Ovary (tissue), 10 donors: ENCODE measurements at regions of chr7 and their contacts with region 1.

Region 1: GRCh38 chr7:22559829-22560489 is 60.0 kb upstream of the STEAP1B start:
- DNase-seq: peak; percentile 60 to 75 (median 71)
- H3K4me3 ChIP-seq: no peak overlapping the region
- H3K27ac ChIP-seq: no peak overlapping the region
- H3K4me1 ChIP-seq: peaks cover 8% of the 10 kb centered on the region
- H3K27me3 ChIP-seq: no peaks in the 10 kb centered on the region
- CTCF ChIP-seq: peak; percentile 54 to 73 (median 72)
- EP300 ChIP-seq: no peak
- POLR2A ChIP-seq: no peak

Region 2: GRCh38 chr7:22640269-22640668 is 80.3 kb after region 1 on chr7:
- intact Hi-C with region 1: no loop called
- DNase-seq: no peak
- H3K4me3 ChIP-seq: no peak overlapping the region
- H3K27ac ChIP-seq: no peak overlapping the region
- H3K4me1 ChIP-seq: no peaks in the 10 kb centered on the region
- H3K27me3 ChIP-seq: no peaks in the 10 kb centered on the region
- CTCF ChIP-seq: no peak
- EP300 ChIP-seq: no peak
- POLR2A ChIP-seq: no peak

Region 3: GRCh38 chr7:22726345-22727185 is 166.6 kb after region 1 on chr7:
- intact Hi-C with region 1: loop called in 3 of 4 experiments (anchors 2 to 10 kb)
- DNase-seq: peak; percentile 26 to 62 (median 39)
- H3K4me3 ChIP-seq: peak overlapping the region; percentile 33
- H3K27ac ChIP-seq: peak overlapping the region in 1 of 2 donors; percentile 20
- H3K4me1 ChIP-seq: no peaks in the 10 kb centered on the region
- H3K27me3 ChIP-seq: no peaks in the 10 kb centered on the region
- CTCF ChIP-seq: peak in 1 of 3 donors; percentile 14
- EP300 ChIP-seq: no peak
- POLR2A ChIP-seq: no peak

Region 4: GRCh38 chr7:22827563-22827962 is 267.6 kb after region 1 on chr7:
- intact Hi-C with region 1: no loop called
- DNase-seq: no peak
- H3K4me3 ChIP-seq: no peak overlapping the region
- H3K27ac ChIP-seq: no peak overlapping the region
- H3K4me1 ChIP-seq: no peaks in the 10 kb centered on the region
- H3K27me3 ChIP-seq: no peaks in the 10 kb centered on the region
- CTCF ChIP-seq: no peak
- EP300 ChIP-seq: no peak
- POLR2A ChIP-seq: no peak

Region 5: DNA sequence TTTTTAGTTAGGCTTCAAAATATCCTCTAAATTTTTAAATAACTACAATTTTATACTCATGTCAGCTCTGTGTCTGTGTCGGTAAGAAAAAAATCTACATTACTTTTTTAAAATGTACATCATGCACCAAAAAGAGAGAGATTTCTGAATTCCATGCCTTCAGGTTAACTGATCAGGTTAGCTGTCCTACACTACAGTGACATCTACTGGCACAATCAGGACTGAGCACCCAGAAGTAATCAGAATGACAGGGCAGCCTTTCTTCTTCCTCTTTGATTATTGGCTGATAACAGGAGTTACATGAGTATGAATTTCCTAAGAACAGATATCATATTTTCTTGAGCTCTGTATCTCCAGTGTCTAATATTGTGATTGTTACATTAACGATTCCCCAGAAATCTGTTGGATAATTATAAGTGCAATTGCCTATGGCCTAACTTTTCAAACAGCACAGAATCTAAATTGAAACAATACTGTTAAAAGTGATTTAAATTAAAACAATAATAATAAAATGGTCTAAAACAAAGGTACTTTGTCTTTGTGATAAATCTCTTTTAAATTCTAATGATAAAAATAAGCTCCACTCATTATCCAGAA is 495.7 kb after region 1 on chr7:
- intact Hi-C with region 1: loop called (anchors 5 to 10 kb)
- DNase-seq: peak in 1 of 5 donors; percentile 37
- H3K4me3 ChIP-seq: no peak overlapping the region
- H3K27ac ChIP-seq: no peak overlapping the region
- H3K4me1 ChIP-seq: no peaks in the 10 kb centered on the region
- H3K27me3 ChIP-seq: no peaks in the 10 kb centered on the region
- CTCF ChIP-seq: peak; percentile 59 to 69 (median 67)
- EP300 ChIP-seq: no peak
- POLR2A ChIP-seq: no peak